ENCODE measurements at regions of chr1 and their contacts with region 1.

Region 1: DNA sequence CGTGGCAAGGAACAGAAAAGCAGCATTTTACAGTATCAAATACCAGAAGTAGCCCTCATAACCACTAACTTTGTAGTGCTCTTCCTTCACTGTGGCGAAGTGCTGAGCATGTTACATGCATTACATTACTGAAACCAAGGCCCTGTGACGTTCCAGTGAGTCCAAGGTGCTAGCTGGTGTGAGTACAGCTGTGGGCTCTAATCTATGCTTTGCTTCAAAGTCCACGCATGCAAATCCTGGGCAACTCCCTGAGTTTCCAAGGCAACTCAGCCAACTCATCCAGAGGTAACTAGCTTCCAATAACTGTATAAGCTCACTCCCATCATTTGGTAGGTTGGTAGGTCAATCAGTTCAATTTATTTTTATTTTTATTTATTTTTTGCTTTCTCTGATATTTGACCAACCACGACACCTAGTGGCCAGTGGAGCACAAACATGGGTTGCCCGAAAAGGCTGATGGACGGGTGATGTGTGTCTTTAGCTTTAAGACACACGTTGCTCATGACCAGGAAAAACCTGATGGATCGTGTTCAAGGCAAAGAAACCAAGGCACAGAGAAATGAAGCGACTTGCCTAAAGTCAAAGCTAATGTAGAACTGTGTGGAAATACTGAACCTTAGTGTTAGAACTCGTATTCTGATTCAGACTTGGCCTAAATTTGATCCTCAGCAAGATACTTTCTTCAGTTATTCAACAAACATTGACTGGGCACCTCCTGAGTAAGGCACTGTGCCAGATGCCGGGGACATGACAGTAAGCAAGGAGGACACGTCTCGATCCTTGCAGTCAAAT is 73.0 kb downstream of the GNG12 start:
- DNase-seq: peak; percentile 63 to 71
- H3K4me3 ChIP-seq: no peak overlapping the region
- H3K27ac ChIP-seq: 0 out of 2 replicates have a peak overlapping the region, but pooled peaks have one; percentile 4
- H3K4me1 ChIP-seq: peaks cover 12% of the 10 kb centered on the region
- H3K27me3 ChIP-seq: no peaks in the 10 kb centered on the region
- CTCF ChIP-seq: peak; percentile 99

Region 2: DNA sequence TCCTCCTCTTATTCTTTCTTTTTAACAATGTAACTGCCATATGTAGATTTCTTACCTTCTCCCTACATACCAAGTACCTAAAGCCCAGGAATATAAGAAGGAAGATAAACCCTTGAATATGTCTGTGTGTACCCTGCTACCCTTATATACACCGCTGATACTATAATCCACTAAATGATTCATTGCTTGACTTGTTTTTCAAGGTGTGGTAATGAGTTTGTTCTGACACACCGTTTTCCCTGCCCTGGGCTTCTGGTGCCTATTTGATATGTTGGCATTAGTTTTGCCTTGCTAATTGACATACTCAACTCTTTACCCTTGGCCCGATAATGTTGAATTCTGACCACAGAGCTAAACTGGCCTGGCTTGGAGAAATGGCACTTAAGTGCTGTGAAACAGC is 529.7 kb before region 1 on chr1:
- CTCF ChIA-PET with region 1: no interaction called
- POLR2A ChIA-PET with region 1: no interaction called
- intact Hi-C with region 1: loop called (anchors 10 kb)
- DNase-seq: peak; percentile 6 to 84
- H3K4me3 ChIP-seq: no peak overlapping the region
- H3K27ac ChIP-seq: peak overlapping the region; percentile 45
- H3K4me1 ChIP-seq: peaks cover 27% of the 10 kb centered on the region
- H3K27me3 ChIP-seq: no peaks in the 10 kb centered on the region
- CTCF ChIP-seq: no peak

Region 3: GRCh38 chr1:67561704-67562113 is 198.5 kb before region 1 on chr1:
- CTCF ChIA-PET with region 1: interaction called, 26 read pairs
- POLR2A ChIA-PET with region 1: interaction called, 3 read pairs
- intact Hi-C with region 1: loop called (anchors 1 kb)
- DNase-seq: peak; percentile 97
- H3K4me3 ChIP-seq: peak overlapping the region; percentile 38; the same call in 1 of the 2 replicates
- H3K27ac ChIP-seq: peak overlapping the region; percentile 85
- H3K4me1 ChIP-seq: peaks cover 20% of the 10 kb centered on the region
- H3K27me3 ChIP-seq: no peaks in the 10 kb centered on the region
- CTCF ChIP-seq: peak; percentile 99

Region 4: DNA sequence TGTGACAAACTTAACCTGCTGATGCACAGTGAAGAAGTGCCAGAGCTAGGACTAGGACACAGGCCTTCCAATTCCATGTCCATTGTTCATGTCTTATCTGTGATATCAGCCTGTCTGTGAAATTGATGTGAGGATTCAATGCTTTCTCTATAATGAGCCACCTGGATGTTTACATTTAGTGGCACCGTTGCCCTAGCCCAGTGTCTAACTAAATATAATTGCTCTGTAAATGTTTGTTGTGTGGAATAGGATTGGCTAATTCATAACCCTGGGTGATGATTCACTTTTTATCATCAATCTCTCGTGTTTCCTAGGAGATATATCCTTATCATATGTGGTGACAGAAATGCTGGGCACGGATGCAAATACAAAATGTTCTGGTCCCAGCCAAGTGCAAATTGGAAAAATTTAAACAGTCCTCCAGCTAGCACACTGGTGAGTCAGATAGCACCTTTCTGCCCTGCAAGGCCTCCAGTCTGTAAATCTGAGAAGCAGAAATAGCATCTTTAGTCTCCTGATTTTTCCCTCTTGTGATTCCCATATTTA is 119.9 kb after region 1 on chr1:
- CTCF ChIA-PET with region 1: interaction called, 12 read pairs
- POLR2A ChIA-PET with region 1: no interaction called
- intact Hi-C with region 1: no loop called
- DNase-seq: peak in 1 of 2 experiments; percentile 75
- H3K4me3 ChIP-seq: no peak overlapping the region
- H3K27ac ChIP-seq: no peak overlapping the region
- H3K4me1 ChIP-seq: peaks cover 9% of the 10 kb centered on the region; the same call in 1 of the 2 replicates
- H3K27me3 ChIP-seq: no peaks in the 10 kb centered on the region
- CTCF ChIP-seq: no peak

Measured in PC-9 (cell line).